AG04450 (cell line): ENCODE measurements at regions of chr12 and their contacts with region 1.

Region 1: DNA sequence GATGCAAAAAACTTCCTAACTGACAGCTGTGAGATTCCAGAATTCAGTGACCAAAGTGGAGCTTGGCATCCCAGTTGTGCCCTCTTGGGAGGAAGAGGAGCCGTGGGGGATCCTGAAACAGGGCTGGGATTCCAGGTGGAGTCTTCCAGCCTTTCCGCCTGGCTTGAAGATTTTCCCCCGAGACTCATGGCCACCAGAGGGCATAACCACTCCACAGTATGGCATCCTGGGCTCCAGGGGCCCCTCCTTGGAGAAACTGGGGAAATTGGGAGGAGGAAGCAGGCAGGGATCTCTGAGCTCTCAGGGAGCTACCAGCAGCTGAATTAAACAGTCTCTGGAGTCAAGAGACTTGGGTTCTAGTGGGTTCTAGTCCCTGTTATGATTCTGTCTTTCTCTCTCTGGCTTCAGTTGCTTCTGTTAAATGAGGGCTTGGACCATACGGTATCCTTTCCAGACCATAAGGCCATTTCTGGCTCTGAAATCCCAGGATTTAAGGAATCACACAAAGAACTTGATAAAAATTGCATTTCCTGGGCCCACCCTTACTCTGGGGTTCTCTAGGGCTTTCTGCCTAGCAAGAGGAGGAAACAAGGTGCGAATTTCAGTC is 2.6 kb upstream of the TAMALIN start:
- DNase-seq: no peak
- H3K4me3 ChIP-seq: no peak overlapping the region
- H3K27ac ChIP-seq: no peak overlapping the region
- H3K27me3 ChIP-seq: peaks cover 6% of the 10 kb centered on the region
- CTCF ChIP-seq: peak; percentile 83

Region 2: GRCh38 chr12:52082988-52083637 is 79.0 kb after region 1 on chr12:
- CTCF ChIA-PET with region 1: interaction called, 22 read pairs
- POLR2A ChIA-PET with region 1: interaction called, 3 read pairs
- DNase-seq: no peak
- H3K4me3 ChIP-seq: no peak overlapping the region
- H3K27ac ChIP-seq: peak overlapping the region; percentile 85
- H3K27me3 ChIP-seq: peaks cover 5% of the 10 kb centered on the region
- CTCF ChIP-seq: peak; percentile 99